ENCODE measurements at regions of chr9 and their contacts with region 1.

Region 1: GRCh38 chr9:33225319-33226149 is 14.4 kb upstream of the SPINK4 start:
- DNase-seq: peak; percentile 81
- H3K4me3 ChIP-seq: no peak overlapping the region
- H3K27ac ChIP-seq: no peak overlapping the region
- H3K4me1 ChIP-seq: peaks cover 3 to 19% (median 11%) of the 10 kb centered on the region in 4 donors
- H3K27me3 ChIP-seq: no peaks in the 10 kb centered on the region
- CTCF ChIP-seq: peak; percentile 74 to 95 (median 82)
- EP300 ChIP-seq: no peak
- POLR2A ChIP-seq: no peak

Region 2: GRCh38 chr9:33076358-33077004 is 149.1 kb before region 1 on chr9 and contains the start of gene SMU1:
- in situ Hi-C with region 1: loop called (anchors 5 to 10 kb)
- intact Hi-C with region 1: loop called (anchors 2 kb)
- DNase-seq: peak; percentile 97
- H3K4me3 ChIP-seq: peak within 1 kb of the TSS; percentile 65 to 90 (median 80)
- H3K27ac ChIP-seq: peak within 1 kb of the TSS; percentile 88 to 97 (median 94)
- H3K4me1 ChIP-seq: peaks cover 0 to 26% (median 13%) of the 10 kb centered on the region in 4 donors
- H3K27me3 ChIP-seq: no peaks in the 10 kb centered on the region
- CTCF ChIP-seq: no peak
- EP300 ChIP-seq: no peak
- POLR2A ChIP-seq: peak; percentile 91
- total RNA-seq, gene SMU1: 7.2 to 14.6 (median 10.4) TPM

Region 3: DNA sequence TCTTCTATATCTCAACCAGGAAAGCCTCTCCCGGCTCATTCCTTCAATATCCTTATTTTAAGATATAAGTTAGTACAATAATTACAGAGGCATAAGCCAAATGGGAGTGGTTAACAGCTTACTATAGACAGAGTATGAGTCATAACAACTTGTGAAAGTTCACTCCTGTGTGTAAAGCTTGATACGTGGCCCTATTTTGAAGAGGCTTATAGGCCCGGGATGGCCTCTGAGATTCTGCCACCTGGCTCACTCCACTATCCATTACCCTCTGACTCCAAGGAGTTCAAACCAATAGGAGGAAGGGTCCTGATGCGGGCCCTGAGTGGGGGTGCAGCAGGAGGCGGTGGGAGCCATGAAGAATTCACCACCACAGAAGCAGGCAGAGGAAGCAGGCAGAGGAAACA is 95.0 kb before region 1 on chr9:
- in situ Hi-C with region 1: no loop called
- intact Hi-C with region 1: no loop called
- DNase-seq: no peak
- H3K4me3 ChIP-seq: no peak overlapping the region
- H3K27ac ChIP-seq: peak overlapping the region; percentile 77 to 86 (median 79)
- H3K4me1 ChIP-seq: peaks cover 21 to 62% (median 42%) of the 10 kb centered on the region in 4 donors
- H3K27me3 ChIP-seq: no peaks in the 10 kb centered on the region
- CTCF ChIP-seq: no peak
- EP300 ChIP-seq: no peak
- POLR2A ChIP-seq: no peak

Region 4: GRCh38 chr9:33143241-33143661 is 82.3 kb before region 1 on chr9:
- in situ Hi-C with region 1: no loop called
- intact Hi-C with region 1: no loop called
- DNase-seq: peak; percentile 7
- H3K4me3 ChIP-seq: no peak overlapping the region
- H3K27ac ChIP-seq: peak overlapping the region in 1 of 4 donors; percentile 36
- H3K4me1 ChIP-seq: peaks cover 28 to 84% (median 39%) of the 10 kb centered on the region in 4 donors
- H3K27me3 ChIP-seq: no peaks in the 10 kb centered on the region
- CTCF ChIP-seq: no peak
- EP300 ChIP-seq: no peak
- POLR2A ChIP-seq: no peak

Region 5: GRCh38 chr9:33167046-33167808 is 58.3 kb before region 1 on chr9 and contains the start of gene B4GALT1:
- in situ Hi-C with region 1: loop called in 1 of 4 experiments (anchors 10 kb)
- intact Hi-C with region 1: no loop called
- DNase-seq: peak; percentile 97
- H3K4me3 ChIP-seq: peak within 1 kb of the TSS; percentile 38 to 84 (median 72)
- H3K27ac ChIP-seq: peak within 1 kb of the TSS; percentile 93 to 97 (median 96)
- H3K4me1 ChIP-seq: peaks cover 22 to 49% (median 43%) of the 10 kb centered on the region in 4 donors
- H3K27me3 ChIP-seq: no peaks in the 10 kb centered on the region
- CTCF ChIP-seq: peak in 2 of 5 experiments; percentile 22 to 27
- EP300 ChIP-seq: no peak
- POLR2A ChIP-seq: peak; percentile 88
- total RNA-seq, gene B4GALT1: 23.7 to 126 (median 93.7) TPM

Measured in transverse colon (tissue), 4 donors.